ENCODE measurements at regions of chr20 and their contacts with region 1.

Region 1: DNA sequence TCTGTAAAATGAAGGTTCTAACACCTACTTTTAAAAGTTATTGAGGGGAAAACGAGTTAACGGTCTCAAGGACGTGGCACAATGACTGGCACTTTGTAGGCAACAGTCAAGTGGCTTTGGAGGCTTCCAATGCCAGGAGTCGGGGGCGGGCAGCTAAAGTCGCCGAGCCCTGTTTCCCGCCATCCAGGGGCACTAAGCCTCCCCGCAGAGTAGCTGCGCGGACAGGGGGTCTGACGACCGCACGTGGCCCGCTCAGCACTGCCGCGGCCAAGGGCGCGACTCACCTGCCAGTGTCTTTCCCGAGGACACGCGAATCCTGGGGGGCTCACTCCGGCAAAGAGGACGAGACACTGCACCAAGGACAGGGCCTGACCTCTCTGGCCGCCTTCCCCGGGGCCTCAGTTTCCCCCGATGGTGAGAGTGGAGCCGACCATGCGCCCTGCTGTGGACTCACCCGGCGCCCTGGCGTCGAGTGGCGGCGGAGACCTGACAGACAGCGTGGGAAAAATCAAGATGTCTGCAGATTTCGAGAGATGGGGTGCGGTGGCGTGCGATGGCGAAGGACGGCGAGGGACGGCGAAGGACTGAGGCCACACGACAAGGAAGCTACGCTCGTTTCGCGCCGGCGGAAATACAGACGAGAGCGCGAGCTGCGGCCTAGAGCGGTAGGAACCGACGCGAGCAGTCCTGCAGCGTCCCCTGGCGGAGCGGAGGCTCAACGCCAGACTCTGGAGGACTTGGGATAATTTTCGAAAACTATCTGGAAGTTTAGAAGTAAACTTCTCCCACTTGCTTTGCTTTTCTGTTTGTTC is at the start of gene SNHG17:
- DNase-seq: peak; percentile 88 to 89
- H3K4me3 ChIP-seq: peak within 1 kb of the TSS; percentile 99
- H3K27ac ChIP-seq: peak within 1 kb of the TSS; percentile 90
- H3K4me1 ChIP-seq: peaks cover 35% of the 10 kb centered on the region
- H3K27me3 ChIP-seq: no peaks in the 10 kb centered on the region
- CTCF ChIP-seq: peak; percentile 100
- total RNA-seq, gene SNHG17: 41.5 and 58.9 TPM in 2 replicates

Region 2: DNA sequence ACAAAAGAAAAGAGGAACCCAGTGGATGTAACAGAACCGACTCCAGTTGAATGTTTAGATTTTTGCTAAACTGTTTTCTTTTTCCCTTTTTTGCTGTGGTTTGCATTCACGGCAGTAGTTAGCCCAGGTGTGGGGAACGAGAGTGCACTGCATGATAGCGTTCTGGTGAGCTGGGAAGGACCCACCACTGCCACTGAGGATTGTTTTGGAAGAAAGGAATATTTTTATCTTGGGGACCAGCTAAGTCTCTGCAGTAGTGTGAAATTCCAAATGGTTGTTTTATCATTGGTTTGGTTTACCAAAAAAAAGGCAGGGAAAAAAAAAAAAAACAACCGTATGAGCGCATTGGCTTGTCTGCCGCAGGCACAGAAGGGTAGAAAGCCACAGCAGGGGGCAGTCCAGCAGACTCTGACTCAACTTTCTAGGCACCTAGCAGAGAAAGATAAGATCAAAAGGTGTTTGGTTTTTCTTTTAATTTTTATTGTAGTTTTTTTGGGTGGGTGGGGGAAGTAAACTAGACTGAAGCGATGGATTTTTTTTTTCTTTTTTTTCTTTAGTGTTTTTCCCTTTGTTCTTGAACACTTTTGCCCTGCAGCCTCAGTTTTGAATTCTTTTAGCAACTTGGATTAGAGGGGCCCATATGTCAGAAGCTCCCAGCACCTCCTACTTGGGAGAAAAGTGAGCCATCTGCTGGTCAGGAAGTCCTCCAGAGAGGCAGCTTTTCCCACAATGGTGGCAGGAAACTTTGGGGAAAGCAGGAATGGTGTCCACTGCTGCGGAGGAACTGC is 1842.9 kb before region 1 on chr20:
- CTCF ChIA-PET with region 1: interaction called, 10 read pairs
- POLR2A ChIA-PET with region 1: no interaction called
- intact Hi-C with region 1: no loop called
- DNase-seq: peak in 1 of 2 experiments; percentile 61
- H3K4me3 ChIP-seq: no peak overlapping the region
- H3K27ac ChIP-seq: no peak overlapping the region
- H3K4me1 ChIP-seq: no peaks in the 10 kb centered on the region
- H3K27me3 ChIP-seq: no peaks in the 10 kb centered on the region
- CTCF ChIP-seq: peak; percentile 43; the same call in 1 of the 2 replicates

Region 3: DNA sequence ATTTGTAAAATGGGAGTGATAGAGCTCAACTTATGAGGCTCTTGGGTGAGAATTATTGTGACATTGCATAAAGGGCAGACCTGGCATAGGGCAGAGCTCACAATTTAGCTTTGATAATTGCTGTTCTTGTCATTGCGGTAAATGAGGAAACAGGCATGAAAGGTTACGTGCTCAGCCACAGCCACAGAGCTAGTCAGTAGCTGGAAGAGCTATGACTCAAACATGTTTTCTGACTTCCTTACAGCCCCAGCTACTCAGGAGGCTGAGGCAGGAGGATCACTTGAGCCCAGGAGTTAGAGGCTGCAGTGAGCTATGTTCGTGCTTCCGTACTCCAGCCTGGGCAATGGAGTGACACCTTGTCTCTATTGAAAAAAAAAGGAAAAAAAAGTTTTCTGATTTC is 1169.8 kb before region 1 on chr20:
- CTCF ChIA-PET with region 1: no interaction called
- POLR2A ChIA-PET with region 1: interaction called, 10 read pairs
- intact Hi-C with region 1: no loop called
- DNase-seq: no peak
- H3K4me3 ChIP-seq: no peak overlapping the region
- H3K27ac ChIP-seq: no peak overlapping the region
- H3K4me1 ChIP-seq: no peaks in the 10 kb centered on the region
- H3K27me3 ChIP-seq: peaks cover 17% of the 10 kb centered on the region
- CTCF ChIP-seq: no peak

Region 4: GRCh38 chr20:37475252-37475651 is 959.7 kb before region 1 on chr20:
- CTCF ChIA-PET with region 1: no interaction called
- POLR2A ChIA-PET with region 1: no interaction called
- intact Hi-C with region 1: no loop called
- DNase-seq: no peak
- H3K4me3 ChIP-seq: no peak overlapping the region
- H3K27ac ChIP-seq: no peak overlapping the region
- H3K4me1 ChIP-seq: no peaks in the 10 kb centered on the region
- H3K27me3 ChIP-seq: peaks cover 97% of the 10 kb centered on the region
- CTCF ChIP-seq: no peak

Region 5: GRCh38 chr20:38325905-38326304 is 109.0 kb before region 1 on chr20:
- CTCF ChIA-PET with region 1: no interaction called
- POLR2A ChIA-PET with region 1: no interaction called
- intact Hi-C with region 1: no loop called
- DNase-seq: no peak
- H3K4me3 ChIP-seq: no peak overlapping the region
- H3K27ac ChIP-seq: no peak overlapping the region
- H3K4me1 ChIP-seq: no peaks in the 10 kb centered on the region
- H3K27me3 ChIP-seq: peaks cover 59% of the 10 kb centered on the region
- CTCF ChIP-seq: no peak

Region 6: DNA sequence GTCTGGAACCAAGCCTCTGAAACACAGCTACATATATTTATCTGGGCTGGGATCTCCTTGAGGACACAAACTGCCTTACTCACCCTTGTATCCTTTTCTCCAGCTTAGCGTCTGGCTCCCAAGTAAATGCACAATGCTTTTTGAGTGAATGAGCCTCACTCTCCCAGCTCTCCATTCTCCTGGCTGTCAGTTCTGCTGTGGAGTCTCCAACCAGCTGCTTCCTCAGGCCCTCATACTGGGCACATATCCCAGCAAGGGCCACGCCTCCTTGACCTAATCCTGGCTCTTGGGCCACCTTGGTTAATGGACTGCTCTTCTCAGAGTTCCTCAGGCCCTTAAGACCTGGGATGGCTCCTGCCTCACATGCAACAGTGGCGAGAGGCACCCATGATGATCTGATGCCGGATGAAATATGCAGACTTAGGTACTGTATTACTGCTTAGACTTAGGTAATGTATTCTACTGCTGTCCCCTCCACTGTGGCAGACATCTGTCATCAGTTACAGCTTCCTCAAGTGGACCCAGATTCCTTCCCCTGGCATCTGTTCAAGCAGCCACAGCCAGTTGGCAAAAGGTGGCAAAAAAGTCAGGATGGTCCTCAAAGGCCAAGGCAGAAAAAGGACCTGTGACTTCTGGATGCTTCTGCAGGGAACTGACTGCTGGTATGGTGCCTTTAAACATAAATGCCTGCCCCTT is 16.3 kb before region 1 on chr20:
- CTCF ChIA-PET with region 1: interaction called, 10 read pairs
- POLR2A ChIA-PET with region 1: interaction called, 4 read pairs
- intact Hi-C with region 1: no loop called
- DNase-seq: no peak
- H3K4me3 ChIP-seq: no peak overlapping the region
- H3K27ac ChIP-seq: no peak overlapping the region
- H3K4me1 ChIP-seq: no peaks in the 10 kb centered on the region
- H3K27me3 ChIP-seq: no peaks in the 10 kb centered on the region
- CTCF ChIP-seq: no peak

Region 7: GRCh38 chr20:38446441-38447209 is 11.7 kb after region 1 on chr20:
- CTCF ChIA-PET with region 1: interaction called, 3 read pairs
- POLR2A ChIA-PET with region 1: interaction called, 7 read pairs
- intact Hi-C with region 1: loop called (anchors 1 kb)
- DNase-seq: peak; percentile 75 to 92
- H3K4me3 ChIP-seq: peak overlapping the region; percentile 89
- H3K27ac ChIP-seq: peak overlapping the region; percentile 48; the same call in 1 of the 2 replicates
- H3K4me1 ChIP-seq: no peaks in the 10 kb centered on the region
- H3K27me3 ChIP-seq: no peaks in the 10 kb centered on the region
- CTCF ChIP-seq: peak; percentile 98

Region 8: GRCh38 chr20:38460040-38460623 is 25.2 kb after region 1 on chr20:
- CTCF ChIA-PET with region 1: interaction called, 10 read pairs
- POLR2A ChIA-PET with region 1: interaction called, 10 read pairs
- intact Hi-C with region 1: no loop called
- DNase-seq: peak; percentile 65 to 92
- H3K4me3 ChIP-seq: no peak overlapping the region; the same call in 1 of the 2 replicates
- H3K27ac ChIP-seq: peak overlapping the region; percentile 40
- H3K4me1 ChIP-seq: peaks cover 11% of the 10 kb centered on the region
- H3K27me3 ChIP-seq: no peaks in the 10 kb centered on the region
- CTCF ChIP-seq: no peak

Region 9: DNA sequence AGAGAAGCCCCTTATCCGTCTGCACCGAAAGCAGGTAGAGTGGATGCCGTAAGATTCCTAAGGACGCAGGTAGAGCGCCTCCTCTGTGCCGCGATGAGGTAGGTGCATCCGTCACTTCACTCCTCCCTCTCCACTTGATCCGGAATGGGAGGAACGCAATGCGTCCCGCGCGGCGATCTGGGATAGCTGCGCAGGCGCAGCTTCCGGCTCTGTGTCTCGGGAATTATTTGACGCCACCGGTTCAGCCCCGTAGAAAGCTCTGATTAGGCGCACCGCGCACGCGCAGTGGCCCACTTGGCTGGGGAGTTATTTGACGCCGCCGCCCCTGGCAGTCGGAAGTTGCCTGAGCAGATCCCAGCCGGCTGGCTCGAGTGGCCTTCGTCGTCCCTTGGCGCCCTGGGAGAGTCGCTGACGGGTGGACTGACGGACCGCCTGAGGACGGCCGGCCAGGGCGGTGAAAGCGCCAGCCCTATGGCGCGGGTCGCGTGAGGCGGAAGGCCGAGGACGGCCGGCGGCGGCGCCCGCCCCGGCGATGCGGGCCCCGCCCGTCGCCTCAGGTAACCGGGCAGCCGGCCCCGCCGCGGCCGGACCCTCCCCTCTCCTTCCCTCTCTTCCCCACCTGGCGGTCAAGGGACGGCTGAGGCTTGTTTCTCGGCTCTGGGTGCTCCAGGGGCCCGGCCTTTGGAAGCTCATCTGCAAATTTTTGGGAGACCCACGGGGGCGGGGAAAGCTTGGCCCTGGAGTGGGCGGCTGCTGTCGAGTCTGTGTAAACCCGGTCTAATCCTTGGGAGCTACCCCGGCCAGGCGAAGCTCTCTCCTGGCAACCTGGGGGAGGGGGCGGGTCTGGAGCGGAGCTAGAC is 37.8 kb after region 1 on chr20 and contains the start of gene RALGAPB:
- CTCF ChIA-PET with region 1: interaction called, 27 read pairs
- POLR2A ChIA-PET with region 1: interaction called, 33 read pairs
- intact Hi-C with region 1: loop called (anchors 1 kb)
- DNase-seq: peak; percentile 98 to 100
- H3K4me3 ChIP-seq: peak within 1 kb of the TSS; percentile 88
- H3K27ac ChIP-seq: peak within 1 kb of the TSS; percentile 62
- H3K4me1 ChIP-seq: peaks cover 28% of the 10 kb centered on the region
- H3K27me3 ChIP-seq: no peaks in the 10 kb centered on the region
- CTCF ChIP-seq: peak; percentile 78
- total RNA-seq, gene RALGAPB: 35.2 and 40.2 TPM in 2 replicates

Measured in PC-9 (cell line).